GM10248 (cell line): ENCODE measurements at regions of chr2 and their contacts with region 1.

Region 1: DNA sequence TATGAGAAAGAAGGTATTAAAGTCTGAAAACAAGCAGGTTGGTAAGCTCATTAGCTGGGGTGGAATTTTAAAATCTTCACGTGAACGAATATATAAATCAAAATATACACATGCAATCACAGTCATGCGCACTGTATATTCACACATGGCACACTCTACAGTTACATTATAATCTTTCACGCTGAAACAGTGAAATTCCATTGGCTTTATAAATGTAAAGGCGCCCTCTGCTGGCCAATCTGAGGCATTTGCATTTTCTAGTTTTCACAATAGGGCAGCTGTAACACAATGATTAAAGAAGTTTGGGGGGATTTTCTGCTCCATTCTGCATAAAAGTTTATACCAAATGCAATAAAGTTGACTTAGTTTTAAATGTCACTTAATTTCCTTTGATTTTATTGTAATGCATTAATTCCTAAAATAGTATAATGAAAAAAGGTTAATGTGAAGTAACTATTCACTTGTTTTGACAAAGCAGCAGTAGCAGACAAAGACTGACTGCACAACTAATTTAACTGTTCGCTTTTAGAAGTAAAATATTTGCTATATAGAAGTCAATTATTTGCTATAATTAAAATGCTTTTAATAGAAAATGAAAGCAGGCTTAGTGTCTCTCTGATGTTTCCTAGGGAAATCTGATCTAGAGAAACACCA is 17.2 kb downstream of the IFIH1 start:
- DNase-seq: peak; percentile 27
- CTCF ChIP-seq: peak; percentile 83

Region 2: DNA sequence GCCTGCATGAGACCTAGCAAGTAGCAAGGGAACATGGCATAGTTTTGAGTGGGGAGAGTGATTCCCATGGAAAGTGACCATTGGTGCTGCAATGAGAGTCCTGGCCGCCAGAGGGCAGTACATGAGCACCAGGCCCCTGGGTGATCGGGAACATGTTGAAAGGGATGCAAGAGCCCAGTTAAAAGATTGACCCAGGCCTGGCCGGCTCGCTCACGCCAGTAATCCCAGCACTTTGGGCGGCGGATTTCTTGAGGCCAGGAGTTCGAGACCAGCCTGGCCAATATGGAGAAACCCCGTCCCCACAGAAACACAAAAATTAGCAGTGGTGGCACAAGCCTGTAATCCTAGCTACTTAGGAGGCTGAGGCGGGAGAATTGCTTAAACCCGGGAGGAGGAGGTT is 80.2 kb before region 1 on chr2:
- CTCF ChIA-PET with region 1: interaction called, 210 read pairs
- POLR2A ChIA-PET with region 1: interaction called, 3 read pairs
- DNase-seq: peak; percentile 65
- CTCF ChIP-seq: peak; percentile 93

Region 3: DNA sequence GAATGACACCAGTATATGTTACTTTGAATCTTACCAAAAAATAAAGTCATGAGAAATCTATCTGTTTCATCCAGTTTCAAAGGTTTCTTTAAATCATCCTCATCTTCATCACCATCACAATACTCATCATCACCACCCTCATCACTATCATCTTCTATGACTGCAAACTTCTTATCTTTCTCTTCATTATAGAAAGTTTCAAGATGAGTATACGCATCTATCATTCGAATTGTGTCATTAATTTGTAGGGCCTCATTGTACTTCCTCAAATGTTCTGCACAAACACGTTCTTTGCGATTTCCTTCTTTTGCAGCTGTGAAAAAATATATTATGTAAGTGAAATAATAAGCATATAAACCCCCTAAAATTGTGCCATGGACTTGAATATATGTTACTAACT is 23.9 kb before region 1 on chr2:
- CTCF ChIA-PET with region 1: interaction called, 66 read pairs
- POLR2A ChIA-PET with region 1: no interaction called
- DNase-seq: no peak
- CTCF ChIP-seq: no peak

Region 4: DNA sequence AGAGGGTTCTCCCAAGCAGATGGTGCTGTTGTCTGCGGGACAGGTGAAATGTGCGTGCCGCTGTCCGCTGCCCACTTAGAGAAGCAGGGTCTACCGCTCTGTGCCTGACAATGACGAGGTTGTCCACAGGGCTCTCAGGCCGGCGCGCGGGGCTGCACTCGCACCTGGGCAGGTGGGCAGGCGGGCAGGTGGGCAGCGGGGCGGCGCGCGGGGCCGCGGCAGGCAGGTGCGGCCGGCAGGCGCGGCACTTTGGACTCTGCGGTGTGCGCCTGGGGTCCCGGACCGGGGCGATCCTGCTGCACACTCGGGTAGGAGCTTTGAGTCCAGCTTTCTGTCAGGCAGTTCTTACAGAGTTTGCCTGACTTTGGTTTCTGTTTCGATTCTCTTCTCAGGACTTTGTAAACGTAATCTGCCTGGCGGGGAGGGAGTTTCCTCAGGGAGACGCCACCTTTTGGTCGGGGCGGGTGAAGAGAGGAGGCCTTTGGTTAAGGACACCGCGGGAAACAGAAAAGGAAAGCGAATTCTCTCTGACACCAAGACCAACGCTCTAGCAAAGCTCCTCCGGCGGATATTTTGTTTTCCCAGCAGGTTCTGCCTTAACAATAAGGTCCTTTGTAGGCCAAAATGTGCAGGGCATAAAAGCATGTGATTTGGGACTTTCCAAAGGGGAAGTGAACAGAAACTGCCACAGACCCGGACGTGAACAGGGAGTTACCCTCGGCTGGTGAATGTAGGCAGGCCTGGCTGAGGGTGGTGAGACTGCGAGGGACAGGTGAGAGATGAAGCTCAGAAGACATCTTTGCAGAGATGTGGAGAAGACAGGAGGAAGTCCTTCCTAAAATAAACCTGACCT is 17.3 kb after region 1 on chr2 and contains the start of gene IFIH1:
- CTCF ChIA-PET with region 1: interaction called, 179 read pairs
- POLR2A ChIA-PET with region 1: interaction called, 3 read pairs
- DNase-seq: peak; percentile 85
- CTCF ChIP-seq: peak; percentile 41

Region 5: GRCh38 chr2:162333968-162334367 is 32.7 kb after region 1 on chr2:
- CTCF ChIA-PET with region 1: interaction called, 11 read pairs
- POLR2A ChIA-PET with region 1: no interaction called
- DNase-seq: no peak
- CTCF ChIP-seq: peak; percentile 63